AG04450 (cell line): ENCODE measurements at regions of chr2 and their contacts with region 1.

Region 1: DNA sequence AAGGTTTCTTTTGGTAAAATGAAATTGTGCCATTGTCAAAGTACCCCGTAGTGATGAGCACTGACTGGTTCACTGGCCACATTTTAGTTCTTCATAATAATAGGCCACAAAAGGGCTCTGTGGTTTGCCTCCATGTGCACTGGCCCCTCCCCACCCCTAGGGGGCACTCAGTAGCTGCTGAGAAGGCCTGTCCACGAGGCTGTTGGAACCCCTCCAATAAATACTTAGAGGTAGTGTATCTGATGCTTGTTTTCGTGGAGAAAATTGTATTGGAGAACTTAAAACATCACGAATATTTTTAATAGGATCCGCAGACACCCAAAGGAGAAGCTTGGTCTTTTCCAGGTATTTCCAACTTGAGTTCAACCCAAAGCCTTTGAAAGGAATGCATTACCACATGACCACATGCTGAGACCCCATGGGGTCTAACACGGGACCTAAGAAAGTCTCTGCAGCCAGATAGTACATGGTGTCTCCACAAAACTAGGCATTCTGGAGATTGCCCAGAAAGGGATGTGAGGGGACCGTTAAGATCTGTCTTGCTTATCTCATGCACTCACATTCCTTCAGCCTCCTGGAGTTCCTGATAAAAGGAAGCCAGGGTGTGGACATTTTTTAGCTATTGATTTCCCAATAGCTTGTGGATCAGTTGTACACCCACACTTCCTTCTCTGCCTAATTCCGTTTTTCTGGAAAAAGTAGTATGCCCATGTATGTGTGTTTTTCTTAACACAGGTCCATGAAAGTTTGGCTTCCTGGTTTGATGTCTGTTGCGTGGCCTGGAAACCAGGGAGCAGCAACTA is 28.5 kb upstream of the NOSTRIN start:
- DNase-seq: peak; percentile 24
- H3K4me3 ChIP-seq: no peak overlapping the region
- H3K27ac ChIP-seq: no peak overlapping the region
- H3K27me3 ChIP-seq: no peaks in the 10 kb centered on the region
- CTCF ChIP-seq: peak; percentile 91

Region 2: DNA sequence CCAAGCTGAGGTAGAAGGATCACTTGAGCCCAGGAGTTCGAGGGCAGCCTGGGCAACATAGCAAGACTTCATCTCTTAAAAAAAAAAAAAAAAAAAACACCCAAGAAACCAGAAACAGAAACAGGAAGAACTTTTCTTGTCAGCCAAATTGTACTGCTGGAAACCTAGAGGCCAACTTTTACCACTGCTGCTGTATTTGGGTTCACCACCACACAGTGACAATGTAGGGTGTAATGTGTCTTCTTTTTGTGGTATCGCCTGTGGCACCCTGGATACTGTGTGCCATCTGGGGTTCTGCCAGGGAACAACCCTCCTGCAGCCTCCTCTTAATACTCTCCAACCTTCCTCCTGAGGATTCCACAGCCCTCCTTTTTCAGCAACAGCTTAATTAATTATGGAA is 599.2 kb before region 1 on chr2:
- CTCF ChIA-PET with region 1: no interaction called
- POLR2A ChIA-PET with region 1: no interaction called
- DNase-seq: no peak
- H3K4me3 ChIP-seq: no peak overlapping the region
- H3K27ac ChIP-seq: no peak overlapping the region
- H3K27me3 ChIP-seq: no peaks in the 10 kb centered on the region
- CTCF ChIP-seq: no peak

Region 3: DNA sequence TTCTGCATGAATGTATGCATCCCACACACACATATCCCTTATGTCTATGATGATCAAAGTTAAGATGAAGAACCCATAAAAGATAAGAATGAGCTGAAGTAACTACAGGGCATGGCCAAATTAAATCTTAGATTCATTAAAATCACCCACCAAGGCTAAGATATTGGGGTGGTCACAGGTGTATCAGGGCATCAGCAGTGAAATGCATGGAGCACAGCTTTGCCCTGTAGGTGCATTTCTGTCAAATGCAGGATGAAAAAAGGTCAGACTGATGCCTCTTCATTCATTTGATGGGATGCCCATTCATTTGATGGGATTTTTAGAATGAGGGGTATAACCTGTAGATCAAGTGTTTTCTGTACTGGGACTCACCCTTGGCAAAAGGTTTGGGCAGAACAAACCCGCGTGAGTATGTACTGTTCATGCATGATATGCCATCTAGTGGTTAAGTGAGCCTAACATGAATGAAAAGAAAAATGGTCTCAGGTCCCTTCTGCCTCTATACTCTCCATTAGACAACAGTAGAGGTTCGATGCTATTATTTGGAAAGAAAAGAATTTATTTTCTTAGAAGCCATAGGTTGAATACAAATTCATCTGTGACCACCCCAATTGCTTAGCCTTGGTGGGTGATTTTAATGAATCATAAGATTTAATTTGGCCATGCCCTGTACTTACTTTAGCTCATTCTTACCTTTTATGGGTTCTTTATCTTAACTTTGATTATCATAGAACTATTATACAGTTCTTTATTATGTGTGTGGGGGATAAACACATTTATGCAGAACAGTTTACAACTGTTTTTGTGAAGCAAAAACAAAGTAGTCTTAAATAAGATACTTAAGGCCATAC is 14.7 kb before region 1 on chr2:
- CTCF ChIA-PET with region 1: interaction called, 17 read pairs
- POLR2A ChIA-PET with region 1: no interaction called
- DNase-seq: peak; percentile 20
- H3K4me3 ChIP-seq: no peak overlapping the region
- H3K27ac ChIP-seq: no peak overlapping the region
- H3K27me3 ChIP-seq: no peaks in the 10 kb centered on the region
- CTCF ChIP-seq: peak; percentile 71

Region 4: GRCh38 chr2:168796583-168797285 is 22.8 kb after region 1 on chr2:
- CTCF ChIA-PET with region 1: interaction called, 12 read pairs
- POLR2A ChIA-PET with region 1: no interaction called
- DNase-seq: no peak
- H3K4me3 ChIP-seq: no peak overlapping the region
- H3K27ac ChIP-seq: no peak overlapping the region
- H3K27me3 ChIP-seq: no peaks in the 10 kb centered on the region
- CTCF ChIP-seq: no peak

Region 5: GRCh38 chr2:168920504-168921157 is 146.7 kb after region 1 on chr2:
- CTCF ChIA-PET with region 1: interaction called, 75 read pairs
- POLR2A ChIA-PET with region 1: no interaction called
- DNase-seq: peak; percentile 10
- H3K4me3 ChIP-seq: no peak overlapping the region
- H3K27ac ChIP-seq: no peak overlapping the region
- H3K27me3 ChIP-seq: no peaks in the 10 kb centered on the region
- CTCF ChIP-seq: peak; percentile 58